ENCODE measurements at regions of chr15 and their contacts with region 1.

Region 1: GRCh38 chr15:98647774-98648653 is at the start of gene IGF1R:
- DNase-seq: peak; percentile 80
- ATAC-seq: peak; percentile 20
- H3K4me3 ChIP-seq: peak within 1 kb of the TSS; percentile 83 to 94 (median 91)
- H3K27ac ChIP-seq: peak within 1 kb of the TSS; percentile 85
- H3K4me1 ChIP-seq: peaks cover 22% of the 10 kb centered on the region
- H3K27me3 ChIP-seq: peaks cover 1 to 24% of the 10 kb centered on the region in 2 experiments
- CTCF ChIP-seq: no peak
- EP300 ChIP-seq: no peak
- POLR2A ChIP-seq: no peak; a peak in 1 of 4 replicates
- RAD21 ChIP-seq: peak; percentile 46; the same call in 1 of the 2 replicates
- total RNA-seq, gene IGF1R: 12.0 and 15.9 TPM in 2 replicates

Region 2: GRCh38 chr15:98727115-98728085 is 79.4 kb after region 1 on chr15:
- CTCF ChIA-PET with region 1: no interaction called
- POLR2A ChIA-PET with region 1: no interaction called
- in situ Hi-C with region 1: no loop called
- intact Hi-C with region 1: loop called (anchors 5 kb)
- DNase-seq: peak; percentile 89
- ATAC-seq: peak; percentile 98
- H3K4me3 ChIP-seq: peak overlapping the region in 2 of 3 experiments; percentile 29 to 44; a peak in 3 of 6 replicates
- H3K27ac ChIP-seq: peak overlapping the region; percentile 77
- H3K4me1 ChIP-seq: peaks cover 98% of the 10 kb centered on the region
- H3K27me3 ChIP-seq: no peaks in the 10 kb centered on the region
- CTCF ChIP-seq: no peak; the same call in 1 of the 2 replicates
- EP300 ChIP-seq: peak in 1 of 2 experiments; percentile 45; a peak in 1 of 4 replicates
- POLR2A ChIP-seq: no peak
- RAD21 ChIP-seq: peak; percentile 32